ENCODE measurements at regions of chr3 and their contacts with region 1.

Region 1: GRCh38 chr3:70861855-70862254 is 549.4 kb upstream of the MDFIC2 start:
- DNase-seq: no peak

Region 2: GRCh38 chr3:70771426-70772147 is 90.3 kb before region 1 on chr3:
- intact Hi-C with region 1: no loop called
- DNase-seq: no peak

Region 3: GRCh38 chr3:70970171-70970570 is 108.3 kb after region 1 on chr3:
- intact Hi-C with region 1: no loop called
- DNase-seq: no peak

Region 4: DNA sequence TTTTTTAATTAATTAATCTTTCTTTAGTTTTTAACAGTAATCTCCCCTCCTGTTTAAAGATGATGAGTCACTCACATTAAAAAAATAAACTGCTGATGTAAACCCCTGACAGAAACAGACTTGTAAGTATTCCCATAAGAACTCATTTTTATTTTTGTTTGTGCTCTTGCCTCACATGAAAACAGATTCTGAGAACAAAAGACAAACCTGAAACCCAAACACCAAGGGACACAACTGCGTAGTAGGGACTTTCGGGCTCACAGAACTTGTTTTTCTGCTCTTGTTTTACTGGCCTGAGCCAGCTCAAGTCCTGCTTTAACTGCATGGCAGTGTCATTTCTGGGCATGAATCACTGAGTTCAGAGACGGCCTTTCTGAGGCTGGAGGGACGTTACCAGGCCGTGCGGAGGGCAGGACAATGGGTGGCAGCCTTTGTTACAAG is 120.9 kb after region 1 on chr3:
- intact Hi-C with region 1: loop called (anchors 5 kb)
- DNase-seq: no peak

Measured in cardiac septum (tissue), 1 donor.